Right cardiac atrium (tissue), 5 donors: ENCODE measurements at regions of chr9 and their contacts with region 1.

Region 1: GRCh38 chr9:33374634-33375213 is 27.6 kb downstream of the AQP7 start:
- DNase-seq: peak; percentile 58 to 86 (median 69)
- ATAC-seq: peak; percentile 83 to 84
- H3K4me3 ChIP-seq: no peak overlapping the region
- H3K27ac ChIP-seq: no peak overlapping the region
- H3K4me1 ChIP-seq: no peaks in the 10 kb centered on the region
- H3K27me3 ChIP-seq: no peaks in the 10 kb centered on the region

Region 2: DNA sequence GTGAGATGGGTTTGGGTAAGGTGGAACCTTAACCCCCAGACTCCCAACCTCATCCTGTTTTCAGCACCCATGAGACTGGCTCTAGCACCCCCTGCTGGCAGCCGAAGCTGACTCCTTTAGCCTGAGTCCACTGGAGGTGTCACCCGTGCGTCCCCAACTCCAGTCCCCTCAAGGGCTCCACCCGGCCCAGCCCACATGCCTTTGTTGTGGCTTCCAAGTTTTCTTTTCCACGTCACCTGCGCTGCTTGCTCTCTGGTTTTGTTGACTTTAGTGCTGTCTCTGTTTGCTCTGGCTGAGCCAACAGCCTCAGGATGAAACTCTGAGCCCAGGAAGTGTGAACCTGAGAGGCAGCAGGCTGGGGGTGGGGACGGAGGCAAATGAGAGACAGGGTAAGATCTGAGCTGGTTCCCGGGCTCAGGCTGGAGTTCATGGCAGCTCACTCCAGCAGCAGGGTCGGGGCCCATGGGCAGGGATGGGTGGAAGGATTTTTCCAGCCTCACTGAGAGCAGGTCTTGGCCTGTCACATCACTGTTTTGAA is 40.8 kb after region 1 on chr9:
- intact Hi-C with region 1: loop called in 3 of 4 experiments (anchors 2 to 5 kb)
- DNase-seq: peak; percentile 72 to 93 (median 88)
- ATAC-seq: peak; percentile 79 to 80
- H3K4me3 ChIP-seq: no peak overlapping the region
- H3K27ac ChIP-seq: no peak overlapping the region
- H3K4me1 ChIP-seq: no peaks in the 10 kb centered on the region
- H3K27me3 ChIP-seq: no peaks in the 10 kb centered on the region

Region 3: DNA sequence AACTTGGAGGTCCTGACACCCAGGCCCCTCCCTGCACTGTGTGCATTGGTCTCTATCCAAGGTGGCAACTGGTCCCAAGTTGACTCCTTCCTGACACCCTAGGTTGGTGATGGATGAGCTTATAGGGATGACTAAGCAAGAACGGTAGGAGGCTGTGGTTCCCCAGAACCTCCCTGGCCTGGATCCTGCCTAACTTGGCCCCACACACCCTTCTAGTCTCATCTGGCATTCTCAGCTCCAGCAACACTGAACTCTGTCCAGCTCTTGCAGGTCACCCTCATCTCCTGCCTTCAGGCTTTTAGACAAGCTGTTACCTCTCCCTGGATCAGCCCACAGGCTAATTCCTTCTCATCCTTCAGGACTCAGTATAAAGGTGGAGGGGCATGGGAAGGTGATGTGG is 56.2 kb after region 1 on chr9:
- intact Hi-C with region 1: no loop called
- DNase-seq: no peak
- ATAC-seq: no peak
- H3K4me3 ChIP-seq: no peak overlapping the region
- H3K27ac ChIP-seq: no peak overlapping the region
- H3K4me1 ChIP-seq: peaks cover 3% of the 10 kb centered on the region
- H3K27me3 ChIP-seq: no peaks in the 10 kb centered on the region

Region 4: GRCh38 chr9:33452828-33453271 is 78.1 kb after region 1 on chr9:
- intact Hi-C with region 1: loop called in 1 of 4 experiments (anchors 10 kb)
- DNase-seq: peak in 2 of 3 donors; percentile 58 to 60
- ATAC-seq: peak; percentile 35 to 80
- H3K4me3 ChIP-seq: no peak overlapping the region
- H3K27ac ChIP-seq: no peak overlapping the region
- H3K4me1 ChIP-seq: no peaks in the 10 kb centered on the region
- H3K27me3 ChIP-seq: no peaks in the 10 kb centered on the region

Region 5: DNA sequence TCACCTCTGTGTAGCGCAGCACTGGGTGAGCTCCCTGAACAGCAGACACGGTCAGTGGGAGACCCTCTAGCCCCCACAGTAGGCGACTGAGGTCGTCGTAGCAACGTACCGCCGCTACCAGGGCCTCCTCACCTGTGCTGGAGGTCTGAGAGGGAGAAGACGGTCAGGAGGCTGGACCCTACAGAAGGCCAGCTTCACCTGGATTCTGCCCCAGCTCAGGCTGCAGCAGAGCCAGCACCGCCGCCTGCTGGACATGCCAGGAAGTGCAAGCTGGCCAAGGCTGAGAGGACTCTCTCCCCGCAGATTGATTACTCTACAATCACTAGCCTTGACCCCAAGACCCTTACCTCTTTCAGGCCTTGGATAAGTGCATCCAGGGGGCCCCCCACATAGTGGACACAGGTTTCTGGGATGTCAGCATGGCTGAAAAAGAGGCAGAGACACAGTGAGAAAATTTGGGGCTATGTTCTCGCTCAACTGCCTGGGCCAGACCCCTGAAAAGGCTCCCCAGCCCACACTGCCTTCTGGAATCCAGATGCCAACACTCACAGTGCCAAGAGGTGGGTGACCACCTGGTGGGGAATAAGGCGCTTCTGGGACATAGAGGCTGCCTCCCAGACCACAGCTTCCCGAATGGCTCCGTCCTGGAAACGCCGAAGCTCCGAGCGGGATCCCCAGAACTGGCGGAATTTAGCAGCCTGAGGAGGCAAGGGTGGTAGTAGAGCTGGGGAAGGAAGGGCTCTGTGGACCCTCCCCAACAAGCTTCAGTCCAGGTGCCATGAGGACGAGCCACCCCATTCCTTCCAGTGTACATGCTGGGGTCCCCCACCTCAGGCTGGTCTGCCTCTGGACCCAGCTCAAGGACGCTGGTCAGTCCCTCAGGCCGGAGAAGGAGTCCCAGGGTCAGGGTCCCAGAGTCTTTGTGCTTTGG is 92.1 kb after region 1 on chr9:
- intact Hi-C with region 1: loop called in 2 of 4 experiments (anchors 10 kb)
- DNase-seq: peak; percentile 57 to 85 (median 83)
- ATAC-seq: peak in 1 of 2 donors; percentile 53
- H3K4me3 ChIP-seq: no peak overlapping the region
- H3K27ac ChIP-seq: no peak overlapping the region
- H3K4me1 ChIP-seq: no peaks in the 10 kb centered on the region
- H3K27me3 ChIP-seq: no peaks in the 10 kb centered on the region

Region 6: DNA sequence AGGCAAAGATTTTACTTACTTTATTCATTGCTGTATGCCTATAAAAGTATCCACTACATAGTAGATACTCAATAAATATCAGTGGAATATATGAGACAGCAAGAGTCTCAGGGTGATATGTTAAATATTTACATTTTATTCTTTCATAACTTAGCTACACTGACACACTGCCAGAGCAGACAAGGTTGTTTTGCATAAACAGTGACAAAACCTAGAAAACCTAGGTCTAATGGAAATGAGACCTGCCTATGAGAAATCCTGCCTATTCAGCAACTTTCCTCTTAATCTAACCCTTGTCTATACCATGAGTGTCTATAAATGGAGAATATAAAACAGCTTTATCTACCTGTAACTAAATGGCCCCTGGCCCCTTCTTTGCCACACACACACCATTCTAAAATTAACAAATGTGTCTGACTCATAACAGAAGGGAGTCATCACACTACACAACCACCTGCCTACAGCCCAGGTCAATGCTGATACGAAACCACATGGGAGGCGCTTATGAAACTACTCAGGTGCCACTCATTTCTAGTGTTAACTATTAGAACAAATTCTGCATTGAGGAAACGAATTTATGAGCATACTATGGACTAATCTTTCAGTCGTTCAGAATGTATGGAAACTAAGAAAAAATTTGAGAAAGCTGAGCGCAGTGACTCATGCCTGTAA is 613.6 kb after region 1 on chr9:
- intact Hi-C with region 1: no loop called
- DNase-seq: no peak
- ATAC-seq: no peak
- H3K4me3 ChIP-seq: no peak overlapping the region
- H3K27ac ChIP-seq: no peak overlapping the region
- H3K4me1 ChIP-seq: no peaks in the 10 kb centered on the region
- H3K27me3 ChIP-seq: no peaks in the 10 kb centered on the region